Activated T-helper 1 cell treated with anti-CD3 and anti-CD28 coated beads, Interleukin-12 subunit alpha, Interleukin-12 subunit beta, Interleukin-2, Interleukin-4 antibody, amounts not matched to agents 30 ng/mL and 10 ng/mL and 1 ng/mL, durations not matched to agents 14 hours and 24 hours and 36 hours (primary cell): ENCODE measurements at regions of chr5 and their contacts with region 1.

Region 1: GRCh38 chr5:95858661-95859326 is 36.3 kb upstream of the GLRX start:
- DNase-seq: peak; percentile 84
- H3K4me3 Mint-ChIP-seq: peak overlapping the region; percentile 47
- H3K27ac Mint-ChIP-seq: peak overlapping the region; percentile 66
- H3K4me1 Mint-ChIP-seq: peaks cover 58% of the 10 kb centered on the region
- H3K27me3 Mint-ChIP-seq: no peaks in the 10 kb centered on the region

Region 2: GRCh38 chr5:96113170-96113939 is 254.6 kb after region 1 on chr5:
- intact Hi-C with region 1: loop called (anchors 5 kb)
- DNase-seq: no peak
- H3K4me3 Mint-ChIP-seq: no peak overlapping the region
- H3K27ac Mint-ChIP-seq: peak overlapping the region; percentile 50
- H3K4me1 Mint-ChIP-seq: peaks cover 42% of the 10 kb centered on the region
- H3K27me3 Mint-ChIP-seq: no peaks in the 10 kb centered on the region

Region 3: GRCh38 chr5:96220610-96221390 is 362.0 kb after region 1 on chr5:
- intact Hi-C with region 1: loop called (anchors 2 kb)
- DNase-seq: no peak
- H3K4me3 Mint-ChIP-seq: no peak overlapping the region
- H3K27ac Mint-ChIP-seq: peak overlapping the region; percentile 81
- H3K4me1 Mint-ChIP-seq: peaks cover 13% of the 10 kb centered on the region
- H3K27me3 Mint-ChIP-seq: peaks cover 1% of the 10 kb centered on the region

Region 4: GRCh38 chr5:96344678-96345577 is 486.1 kb after region 1 on chr5:
- intact Hi-C with region 1: loop called (anchors 2 kb)
- DNase-seq: no peak
- H3K4me3 Mint-ChIP-seq: no peak overlapping the region
- H3K27ac Mint-ChIP-seq: peak overlapping the region; percentile 1
- H3K4me1 Mint-ChIP-seq: peaks cover 22% of the 10 kb centered on the region
- H3K27me3 Mint-ChIP-seq: peaks cover 35% of the 10 kb centered on the region

Region 5: DNA sequence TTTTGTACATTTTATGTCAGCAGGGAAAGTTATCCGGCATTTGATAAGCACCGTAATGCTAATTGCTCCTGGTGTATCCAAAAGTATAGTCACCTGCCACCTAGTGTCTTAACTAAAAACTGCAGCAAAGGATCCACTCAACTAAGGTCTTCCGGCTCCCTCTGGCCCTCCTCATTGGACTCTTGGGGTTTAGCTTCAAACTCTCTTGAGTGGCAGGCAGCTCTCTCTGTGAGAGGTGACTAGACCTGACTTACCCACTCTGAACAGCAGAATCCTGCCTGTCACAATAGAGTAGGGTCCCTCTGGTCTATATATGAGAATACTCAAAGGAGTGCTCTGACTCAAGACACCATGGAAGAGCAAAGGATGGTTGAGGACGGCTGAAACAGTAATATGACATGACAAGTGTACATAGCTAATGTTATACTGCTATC is 743.0 kb after region 1 on chr5:
- intact Hi-C with region 1: loop called (anchors 1 kb)
- DNase-seq: peak; percentile 29
- H3K4me3 Mint-ChIP-seq: no peak overlapping the region
- H3K27ac Mint-ChIP-seq: no peak overlapping the region
- H3K4me1 Mint-ChIP-seq: peaks cover 17% of the 10 kb centered on the region
- H3K27me3 Mint-ChIP-seq: peaks cover 13% of the 10 kb centered on the region

Region 6: DNA sequence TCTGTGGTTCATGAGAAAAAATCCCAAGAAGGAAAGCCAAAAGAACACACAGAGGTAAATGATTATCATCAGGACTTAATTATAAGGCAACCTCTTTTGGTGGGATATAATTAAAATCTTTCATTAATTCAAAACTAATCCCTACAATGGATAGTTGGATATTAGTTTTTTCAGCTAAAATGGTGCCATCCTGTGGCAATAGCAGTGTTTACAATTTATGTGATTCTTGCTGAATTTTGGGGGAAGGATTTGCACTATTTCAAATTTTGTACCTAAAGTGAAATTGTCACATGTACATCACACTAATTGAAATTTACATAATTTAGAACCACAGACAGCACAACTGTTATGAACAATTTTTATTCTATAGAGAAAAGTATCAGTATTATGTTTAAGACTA is 870.4 kb after region 1 on chr5:
- intact Hi-C with region 1: no loop called
- DNase-seq: no peak
- H3K4me3 Mint-ChIP-seq: no peak overlapping the region
- H3K27ac Mint-ChIP-seq: no peak overlapping the region
- H3K4me1 Mint-ChIP-seq: peaks cover 2% of the 10 kb centered on the region
- H3K27me3 Mint-ChIP-seq: no peaks in the 10 kb centered on the region